B cell (primary cell): ENCODE measurements at regions of chr15 and their contacts with region 1.

Region 1: GRCh38 chr15:85742186-85742821 is 52.4 kb downstream of the KLHL25 start:
- DNase-seq: no peak
- ATAC-seq: no peak
- H3K4me3 ChIP-seq: no peak overlapping the region
- H3K4me3 Mint-ChIP-seq: no peak overlapping the region
- H3K27ac ChIP-seq: no peak overlapping the region
- H3K27ac Mint-ChIP-seq: no peak overlapping the region
- H3K4me1 ChIP-seq: no peaks in the 10 kb centered on the region
- H3K4me1 Mint-ChIP-seq: no peaks in the 10 kb centered on the region
- H3K27me3 ChIP-seq: no peaks in the 10 kb centered on the region
- H3K27me3 Mint-ChIP-seq: no peaks in the 10 kb centered on the region
- CTCF ChIP-seq: no peak

Region 2: DNA sequence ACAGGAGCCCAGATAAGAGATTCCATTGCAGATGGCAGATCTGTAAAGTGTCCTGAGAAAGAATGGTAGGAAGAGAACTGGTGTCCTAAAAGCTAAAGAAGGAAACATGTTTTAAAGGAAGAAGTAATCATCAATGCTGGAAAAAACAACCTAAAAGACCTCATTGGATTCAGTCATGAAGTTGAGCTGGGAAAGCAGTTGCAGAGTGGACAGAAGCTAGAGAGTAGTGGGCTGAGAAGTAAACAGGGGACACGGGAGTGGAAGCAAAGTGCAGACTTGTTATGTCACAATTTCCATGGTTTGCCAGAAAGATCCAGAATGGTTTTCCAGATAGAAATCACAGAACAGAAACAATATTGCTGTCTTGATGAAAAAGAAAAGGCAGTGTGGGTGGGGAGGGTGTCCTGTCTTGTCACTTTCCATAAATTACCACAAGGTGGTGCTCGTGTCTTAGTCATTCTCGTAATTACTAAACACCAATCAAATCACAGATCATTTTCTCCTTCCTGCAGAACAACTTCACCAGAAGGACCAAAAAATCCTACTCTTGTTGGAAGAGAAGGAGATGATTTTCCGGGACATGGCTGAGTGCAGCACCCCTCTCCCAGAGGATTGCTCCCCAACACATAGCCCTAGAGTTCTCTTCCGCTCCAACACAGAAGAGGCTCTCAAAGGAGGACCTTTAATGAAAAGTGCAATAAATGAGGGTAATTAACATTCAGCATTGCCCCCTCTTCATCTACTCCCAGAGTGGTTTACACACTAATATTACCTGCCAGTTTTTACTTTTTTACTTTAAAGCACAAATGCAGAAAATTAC is 12.1 kb before region 1 on chr15:
- CTCF ChIA-PET with region 1: interaction called, 31 read pairs
- POLR2A ChIA-PET with region 1: no interaction called
- intact Hi-C with region 1: no loop called
- DNase-seq: peak; percentile 70
- ATAC-seq: peak; percentile 69
- H3K4me3 ChIP-seq: no peak overlapping the region
- H3K4me3 Mint-ChIP-seq: no peak overlapping the region
- H3K27ac ChIP-seq: peak overlapping the region in 1 of 2 donors; percentile 62
- H3K27ac Mint-ChIP-seq: peak overlapping the region; percentile 76
- H3K4me1 ChIP-seq: no peaks in the 10 kb centered on the region
- H3K4me1 Mint-ChIP-seq: peaks cover 3% of the 10 kb centered on the region
- H3K27me3 ChIP-seq: no peaks in the 10 kb centered on the region
- H3K27me3 Mint-ChIP-seq: no peaks in the 10 kb centered on the region
- CTCF ChIP-seq: peak; percentile 86